ENCODE measurements at regions of chr20 and their contacts with region 1.

Region 1: DNA sequence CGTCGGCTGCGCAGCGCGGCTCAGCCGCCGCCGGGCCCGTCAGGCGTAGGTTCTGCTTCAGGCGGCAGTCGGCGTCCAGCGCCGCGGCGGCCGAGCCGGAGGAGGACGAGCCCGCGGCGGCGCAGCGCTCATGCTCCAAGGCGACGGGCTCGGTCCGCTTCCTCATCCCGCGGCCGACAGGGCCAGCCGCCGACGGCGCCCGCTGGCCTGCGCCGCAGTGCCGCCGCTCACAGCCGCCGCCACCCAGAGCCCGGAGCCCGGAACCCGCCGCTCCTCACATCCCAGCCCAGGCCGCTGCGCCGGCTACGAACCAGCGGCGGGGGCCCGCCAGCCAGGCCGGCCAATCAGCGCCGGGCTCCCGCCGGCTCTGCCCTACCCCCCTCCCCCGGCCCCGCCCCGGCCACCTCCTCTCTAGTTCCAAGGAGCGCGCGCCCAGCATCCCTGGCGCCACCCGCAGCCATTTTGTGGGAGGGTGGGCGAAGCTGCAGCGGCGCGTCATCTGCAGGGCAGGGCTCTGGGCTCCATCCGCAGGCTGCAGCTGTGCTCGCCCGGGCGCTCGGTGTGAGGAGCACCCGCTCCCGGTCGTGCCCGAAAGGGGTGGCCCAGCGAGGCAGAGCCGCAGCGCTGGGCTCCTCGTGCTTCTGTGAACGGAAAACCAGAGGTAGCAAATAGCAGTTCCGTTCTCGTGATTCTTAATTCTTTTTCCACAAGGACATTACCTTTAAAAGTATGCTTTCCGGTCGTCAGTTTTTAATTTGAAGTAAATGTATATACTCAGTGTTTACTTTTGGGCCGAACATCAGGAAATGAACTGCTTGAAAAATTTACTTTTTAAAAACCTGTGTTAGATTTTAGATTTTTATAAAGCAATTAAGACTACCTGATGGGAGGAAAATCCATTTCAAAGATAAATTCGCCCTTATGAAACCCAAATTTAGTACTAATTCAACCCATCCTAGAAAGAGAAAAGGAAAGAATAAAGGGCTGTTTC is at the start of gene ABHD12:
- DNase-seq: peak; percentile 96 to 98 (median 98)
- ATAC-seq: peak; percentile 99 to 100 (median 100)
- H3K4me3 ChIP-seq: peak within 1 kb of the TSS; percentile 67 to 97 (median 87)
- H3K27ac ChIP-seq: peak within 1 kb of the TSS; percentile 48 to 93 (median 88)
- H3K4me1 ChIP-seq: peaks cover 0 to 19% (median 7%) of the 10 kb centered on the region in 12 donors
- H3K27me3 ChIP-seq: no peaks in the 10 kb centered on the region
- CTCF ChIP-seq: peak in 1 of 12 donors; percentile 4
- POLR2A ChIP-seq: peak; percentile 49 to 51
- total RNA-seq, gene ABHD12: 15.6 to 43.8 (median 26.5) TPM

Region 2: GRCh38 chr20:25195014-25195961 is 195.5 kb before region 1 on chr20 and contains the start of gene ENTPD6:
- intact Hi-C with region 1: loop called in 8 of 10 experiments (anchors 5 to 10 kb)
- DNase-seq: peak; percentile 94 to 97 (median 94)
- ATAC-seq: peak; percentile 71 to 88 (median 88)
- H3K4me3 ChIP-seq: peak within 1 kb of the TSS; percentile 63 to 99 (median 90)
- H3K27ac ChIP-seq: peak within 1 kb of the TSS; percentile 79 to 98 (median 93)
- H3K4me1 ChIP-seq: peaks cover 0 to 70% (median 42%) of the 10 kb centered on the region in 12 donors
- H3K27me3 ChIP-seq: no peaks in the 10 kb centered on the region
- CTCF ChIP-seq: peak in 6 of 12 donors; percentile 15 to 52 (median 40)
- POLR2A ChIP-seq: peak; percentile 52 to 85
- total RNA-seq, gene ENTPD6: 58.7 to 139 (median 86.7) TPM

Region 3: DNA sequence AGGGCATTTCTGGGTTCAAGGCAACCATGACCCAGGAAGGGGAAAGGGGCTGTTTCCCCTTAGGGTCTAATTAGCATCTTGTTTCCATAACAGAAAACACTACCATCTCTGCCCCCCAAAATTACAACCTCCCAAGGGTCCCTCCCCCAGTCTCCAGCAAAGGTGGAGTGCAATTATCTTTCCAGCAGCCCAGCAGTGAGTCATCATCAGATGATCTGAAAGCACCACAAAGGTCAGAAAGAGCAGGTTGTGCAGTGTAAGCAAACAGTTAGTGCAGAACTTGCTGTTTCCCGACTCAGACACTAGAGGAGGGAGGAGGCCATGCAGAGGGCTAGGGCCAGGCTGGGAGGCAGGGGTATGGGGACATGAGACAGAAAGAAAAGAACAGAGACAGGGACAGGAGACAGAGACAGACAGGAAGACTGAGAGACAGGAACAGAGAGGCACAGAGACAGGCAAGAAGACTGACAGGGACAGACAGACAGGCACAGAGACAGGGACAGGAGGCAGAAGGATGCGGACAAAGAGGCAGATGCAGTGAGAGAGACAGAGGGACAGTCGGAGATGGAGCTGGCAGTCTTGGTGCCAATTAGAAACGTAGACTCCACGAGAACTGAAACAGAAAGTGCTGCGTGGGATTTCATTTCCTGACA is 80.4 kb before region 1 on chr20:
- intact Hi-C with region 1: loop called in 5 of 10 experiments (anchors 5 to 10 kb)
- DNase-seq: peak in 2 of 5 donors; percentile 48 to 65
- ATAC-seq: peak; percentile 79 to 86 (median 84)
- H3K4me3 ChIP-seq: peak overlapping the region in 6 of 12 donors; percentile 10 to 47 (median 26)
- H3K27ac ChIP-seq: peak overlapping the region in 10 of 12 donors; percentile 38 to 89 (median 70)
- H3K4me1 ChIP-seq: peaks cover 0 to 39% (median 24%) of the 10 kb centered on the region in 12 donors
- H3K27me3 ChIP-seq: no peaks in the 10 kb centered on the region
- CTCF ChIP-seq: peak in 9 of 12 donors; percentile 12 to 54 (median 33)
- POLR2A ChIP-seq: no peak

Region 4: GRCh38 chr20:25353747-25354705 is 36.8 kb before region 1 on chr20:
- intact Hi-C with region 1: loop called in 2 of 10 experiments (anchors 5 kb)
- DNase-seq: no peak
- ATAC-seq: no peak
- H3K4me3 ChIP-seq: no peak overlapping the region
- H3K27ac ChIP-seq: peak overlapping the region in 1 of 12 donors; percentile 67
- H3K4me1 ChIP-seq: peaks cover 0 to 36% (median 15%) of the 10 kb centered on the region in 12 donors
- H3K27me3 ChIP-seq: no peaks in the 10 kb centered on the region
- CTCF ChIP-seq: no peak
- POLR2A ChIP-seq: no peak

Region 5: DNA sequence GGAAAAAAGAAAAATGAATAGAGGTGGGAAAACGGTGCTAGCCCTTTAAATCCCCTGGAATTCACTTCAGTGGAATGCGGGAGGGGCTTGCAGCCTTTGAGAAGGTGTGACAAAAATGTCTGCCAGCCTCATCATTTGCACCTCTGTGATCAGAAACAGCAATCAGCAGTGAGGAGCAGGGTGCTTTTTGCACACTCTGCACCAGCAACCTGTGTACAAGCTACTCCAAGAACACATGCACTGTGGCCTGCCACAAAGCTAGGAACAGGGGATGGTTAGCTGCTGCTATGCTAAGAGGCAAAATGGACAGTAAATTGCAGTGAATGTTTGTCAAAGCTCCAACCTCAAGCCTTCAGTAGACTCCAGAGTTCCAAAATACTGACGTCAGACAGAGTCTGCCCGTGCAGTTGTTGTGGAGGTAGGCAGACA is 46.3 kb after region 1 on chr20:
- intact Hi-C with region 1: no loop called
- DNase-seq: no peak
- ATAC-seq: peak in 2 of 4 donors; percentile 27 to 57
- H3K4me3 ChIP-seq: no peak overlapping the region
- H3K27ac ChIP-seq: no peak overlapping the region
- H3K4me1 ChIP-seq: peaks cover 0 to 4% (median 0%) of the 10 kb centered on the region in 12 donors
- H3K27me3 ChIP-seq: no peaks in the 10 kb centered on the region
- CTCF ChIP-seq: no peak
- POLR2A ChIP-seq: no peak

Region 6: DNA sequence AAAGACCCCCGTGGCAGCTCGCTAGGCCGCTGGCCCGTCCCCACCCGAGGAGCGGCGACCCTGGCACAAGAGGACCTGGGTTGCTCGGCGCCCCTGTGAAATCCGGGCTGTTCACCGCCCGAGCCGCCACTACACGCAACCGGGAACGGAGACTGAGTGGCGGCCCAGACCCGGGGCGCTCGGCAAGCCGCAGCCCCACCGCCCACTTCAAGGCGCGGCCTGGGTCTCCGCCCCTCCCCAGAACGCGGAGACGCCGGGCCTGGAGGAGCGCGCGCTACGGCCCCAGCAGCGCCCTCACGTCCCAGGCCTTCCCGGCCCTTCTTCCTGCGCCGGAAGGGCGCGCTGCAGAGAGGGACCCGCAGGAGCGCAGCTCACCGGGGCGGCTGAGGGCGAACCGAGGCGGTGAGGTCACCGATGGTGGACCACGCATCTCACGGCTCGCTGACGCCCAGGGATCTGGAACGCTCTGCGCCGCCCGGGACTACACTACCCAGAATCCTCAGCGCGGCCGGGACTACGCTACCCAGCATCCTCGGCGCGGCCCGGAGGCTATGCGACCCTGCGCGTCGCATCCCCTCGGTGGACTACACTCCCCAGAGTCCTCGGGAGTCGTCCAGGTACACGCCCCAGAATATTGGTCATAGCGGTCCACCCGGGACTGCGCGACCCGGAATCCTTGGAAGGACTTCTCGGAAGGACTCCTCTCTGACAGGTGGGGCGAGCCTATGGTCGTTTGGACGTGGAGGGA is 305.7 kb after region 1 on chr20 and contains the start of gene ZNF337:
- intact Hi-C with region 1: loop called in 2 of 10 experiments (anchors 5 to 10 kb)
- DNase-seq: peak; percentile 96 to 98 (median 97)
- ATAC-seq: peak; percentile 100
- H3K4me3 ChIP-seq: peak within 1 kb of the TSS; percentile 73 to 98 (median 89)
- H3K27ac ChIP-seq: peak within 1 kb of the TSS; percentile 69 to 97 (median 93)
- H3K4me1 ChIP-seq: peaks cover 0 to 22% (median 14%) of the 10 kb centered on the region in 12 donors
- H3K27me3 ChIP-seq: no peaks in the 10 kb centered on the region
- CTCF ChIP-seq: peak in 5 of 12 donors; percentile 13 to 39 (median 22)
- POLR2A ChIP-seq: peak; percentile 22 to 84
- total RNA-seq, gene ZNF337: 5.8 to 10.3 (median 6.6) TPM

Measured in heart left ventricle (tissue), 16 donors.